ENCODE measurements at regions of chr1 and their contacts with region 1.

Region 1: GRCh38 chr1:229553621-229554130 is 4.8 kb downstream of the ABCB10 start:
- DNase-seq: no peak
- ATAC-seq: no peak
- H3K4me3 ChIP-seq: no peak overlapping the region
- H3K27ac ChIP-seq: no peak overlapping the region
- H3K4me1 ChIP-seq: peaks cover 15% of the 10 kb centered on the region
- H3K27me3 ChIP-seq: no peaks in the 10 kb centered on the region
- CTCF ChIP-seq: no peak

Region 2: GRCh38 chr1:229336345-229336744 is 217.3 kb before region 1 on chr1:
- CTCF ChIA-PET with region 1: no interaction called
- POLR2A ChIA-PET with region 1: no interaction called
- intact Hi-C with region 1: loop called (anchors 2 kb)
- DNase-seq: no peak
- ATAC-seq: no peak
- H3K4me3 ChIP-seq: no peak overlapping the region
- H3K27ac ChIP-seq: no peak overlapping the region
- H3K4me1 ChIP-seq: peaks cover 17% of the 10 kb centered on the region
- H3K27me3 ChIP-seq: no peaks in the 10 kb centered on the region
- CTCF ChIP-seq: no peak

Region 3: DNA sequence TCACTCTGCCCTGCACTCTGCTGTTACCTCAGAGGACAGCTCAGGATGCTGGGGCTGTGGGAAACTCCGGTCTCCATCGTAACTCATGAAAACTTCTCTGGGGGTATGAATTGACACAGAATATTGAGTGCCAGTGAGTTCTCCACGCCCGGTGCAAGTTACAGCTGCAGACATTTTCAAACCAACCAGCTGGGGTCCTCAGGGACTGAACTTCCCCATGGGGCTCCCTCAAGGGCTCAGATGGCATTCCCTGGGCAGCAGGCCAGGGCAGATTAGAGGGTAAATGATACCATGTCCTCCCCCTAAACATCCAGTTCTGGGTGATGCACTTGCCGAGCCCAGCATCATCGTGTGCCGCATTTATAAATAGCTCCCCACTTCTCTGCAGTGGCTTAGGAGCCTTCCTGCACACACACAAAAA is 183.1 kb before region 1 on chr1:
- CTCF ChIA-PET with region 1: no interaction called
- POLR2A ChIA-PET with region 1: no interaction called
- intact Hi-C with region 1: no loop called
- DNase-seq: no peak
- ATAC-seq: no peak
- H3K4me3 ChIP-seq: no peak overlapping the region
- H3K27ac ChIP-seq: no peak overlapping the region
- H3K4me1 ChIP-seq: peaks cover 8% of the 10 kb centered on the region
- H3K27me3 ChIP-seq: no peaks in the 10 kb centered on the region
- CTCF ChIP-seq: no peak

Region 4: GRCh38 chr1:229657993-229658755 is 104.5 kb after region 1 on chr1:
- CTCF ChIA-PET with region 1: no interaction called
- POLR2A ChIA-PET with region 1: no interaction called
- intact Hi-C with region 1: no loop called
- DNase-seq: no peak
- ATAC-seq: no peak
- H3K4me3 ChIP-seq: no peak overlapping the region
- H3K27ac ChIP-seq: no peak overlapping the region
- H3K4me1 ChIP-seq: no peaks in the 10 kb centered on the region
- H3K27me3 ChIP-seq: no peaks in the 10 kb centered on the region
- CTCF ChIP-seq: no peak